Activated CD4-positive, alpha-beta memory T cell treated with anti-CD3 and anti-CD28 coated beads for 36 hours (primary cell): ENCODE measurements at regions of chr19 and their contacts with region 1.

Region 1: GRCh38 chr19:58196901-58197616 is 14.2 kb downstream of the ZNF274 start:
- DNase-seq: no peak
- H3K4me3 Mint-ChIP-seq: no peak overlapping the region
- H3K27ac Mint-ChIP-seq: no peak overlapping the region
- H3K4me1 Mint-ChIP-seq: no peaks in the 10 kb centered on the region
- H3K27me3 Mint-ChIP-seq: no peaks in the 10 kb centered on the region

Region 2: DNA sequence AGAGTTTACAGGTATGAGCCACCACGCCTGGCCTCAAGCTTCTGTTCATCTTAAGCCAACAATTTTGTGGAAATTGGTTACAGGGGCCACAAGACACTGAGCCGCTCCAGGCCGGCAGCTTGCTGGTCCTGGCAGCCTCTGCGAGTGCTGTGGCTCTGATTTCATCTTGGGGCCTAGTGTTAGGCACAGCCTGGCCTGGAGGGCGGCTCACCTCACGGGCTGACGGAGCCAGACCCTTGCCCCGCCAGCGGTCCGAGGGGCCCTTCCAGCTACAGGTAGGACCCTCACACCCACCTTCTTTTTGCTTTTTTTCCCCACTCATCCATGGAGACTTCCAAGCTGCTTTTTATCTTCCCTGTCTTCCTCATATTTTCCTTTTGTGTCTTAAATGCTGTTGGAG is 40.3 kb after region 1 on chr19:
- CTCF ChIA-PET with region 1: no interaction called
- POLR2A ChIA-PET with region 1: no interaction called
- intact Hi-C with region 1: no loop called
- DNase-seq: no peak
- H3K4me3 Mint-ChIP-seq: no peak overlapping the region
- H3K27ac Mint-ChIP-seq: no peak overlapping the region
- H3K4me1 Mint-ChIP-seq: no peaks in the 10 kb centered on the region
- H3K27me3 Mint-ChIP-seq: no peaks in the 10 kb centered on the region

Region 3: GRCh38 chr19:58252102-58252685 is 55.1 kb after region 1 on chr19:
- CTCF ChIA-PET with region 1: no interaction called
- POLR2A ChIA-PET with region 1: no interaction called
- intact Hi-C with region 1: loop called (anchors 10 kb)
- DNase-seq: no peak
- H3K4me3 Mint-ChIP-seq: no peak overlapping the region
- H3K27ac Mint-ChIP-seq: no peak overlapping the region
- H3K4me1 Mint-ChIP-seq: no peaks in the 10 kb centered on the region
- H3K27me3 Mint-ChIP-seq: no peaks in the 10 kb centered on the region